ENCODE measurements at regions of chr19 and their contacts with region 1.

Region 1: DNA sequence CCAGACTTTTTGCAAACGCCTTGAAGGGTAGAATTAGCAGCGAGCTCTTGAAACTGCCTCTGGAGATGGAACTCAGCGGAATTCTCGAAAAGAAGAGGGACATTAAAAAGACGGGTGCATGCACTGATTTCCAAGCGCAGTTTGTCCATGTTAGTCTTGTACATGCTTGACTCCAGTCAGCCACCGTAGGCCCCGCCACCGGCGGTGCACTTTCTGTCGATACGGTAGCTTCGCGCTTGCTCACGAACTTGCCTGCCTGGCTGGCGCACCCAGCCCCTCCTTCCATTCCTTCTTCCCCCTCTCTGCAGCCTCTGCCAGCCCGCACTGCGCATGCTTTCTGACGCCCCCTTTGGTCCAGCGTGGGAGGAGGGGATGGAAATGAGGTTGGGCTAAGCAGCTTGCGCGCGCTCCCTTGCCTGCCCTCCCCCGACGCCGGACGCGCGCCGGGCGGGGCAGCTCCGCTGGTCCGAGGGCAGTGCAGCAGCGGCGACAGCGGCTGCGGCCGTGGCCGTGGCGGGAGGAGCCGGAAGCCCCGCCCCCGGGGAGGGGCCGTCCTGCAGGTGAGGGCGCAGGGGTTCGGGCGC is at the start of gene ZNF575:
- DNase-seq: peak; percentile 81
- H3K4me3 ChIP-seq: peak within 1 kb of the TSS; percentile 48 to 51
- H3K27ac ChIP-seq: peak within 1 kb of the TSS; percentile 88 to 93
- H3K4me1 ChIP-seq: peaks cover 2% of the 10 kb centered on the region
- H3K27me3 ChIP-seq: no peaks in the 10 kb centered on the region
- CTCF ChIP-seq: no peak
- POLR2A ChIP-seq: peak; percentile 23
- total RNA-seq, gene ZNF575: 2.0 TPM in 1 of 2 donors, not detected in the other

Region 2: DNA sequence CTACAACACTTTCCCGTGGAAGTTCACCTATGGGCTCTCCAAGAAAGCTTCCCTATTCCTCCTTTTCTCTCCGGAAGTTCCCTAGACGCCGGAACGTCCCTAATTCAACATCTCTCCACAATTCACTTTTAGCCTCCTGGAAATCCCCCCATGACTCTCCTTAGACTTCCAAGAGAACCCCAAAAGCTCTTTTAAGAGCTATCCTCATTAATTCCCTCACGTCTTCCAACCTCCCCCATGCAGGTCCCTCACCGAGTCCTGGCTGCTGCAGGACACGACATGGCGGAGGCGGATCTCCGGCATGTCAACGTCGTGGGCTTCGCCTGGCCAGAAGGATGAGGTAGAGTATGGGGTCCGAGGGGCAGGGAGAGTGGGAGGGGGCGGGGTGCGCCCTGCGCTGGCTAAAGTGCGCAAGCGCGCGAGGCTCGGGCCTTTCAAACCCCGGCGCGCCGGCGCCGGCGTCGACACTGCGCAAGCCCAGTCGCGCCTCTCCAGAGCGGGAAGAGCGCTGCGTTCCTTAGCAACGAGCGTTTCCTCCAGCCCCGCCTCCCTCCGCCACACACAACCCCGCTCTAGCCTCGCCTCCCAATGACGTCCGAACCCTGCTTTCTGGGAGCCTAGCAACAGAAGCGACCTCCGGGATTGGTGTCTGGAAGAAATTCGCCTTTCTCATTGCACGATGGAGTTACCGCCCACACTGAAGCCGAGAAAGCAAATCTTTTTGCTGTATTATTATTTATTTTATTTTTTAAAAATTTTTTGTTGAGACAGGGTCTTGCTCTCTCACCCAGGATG is 42.3 kb after region 1 on chr19 and contains the starts of genes PINLYP and XRCC1:
- intact Hi-C with region 1: loop called (anchors 5 kb)
- DNase-seq: peak; percentile 97
- H3K4me3 ChIP-seq: peak within 1 kb of the TSS; percentile 65 to 71
- H3K27ac ChIP-seq: peak within 1 kb of the TSS; percentile 75 to 77
- H3K4me1 ChIP-seq: no peaks in the 10 kb centered on the region
- H3K27me3 ChIP-seq: no peaks in the 10 kb centered on the region
- CTCF ChIP-seq: no peak
- POLR2A ChIP-seq: peak; percentile 63
- total RNA-seq, gene PINLYP: 4.8 to 7.8 TPM
- total RNA-seq, gene XRCC1: 25.8 to 52.5 TPM

Region 3: GRCh38 chr19:43595999-43596841 is 63.2 kb after region 1 on chr19 and contains the starts of genes IRGQ and ZNF576:
- intact Hi-C with region 1: loop called (anchors 2 kb)
- DNase-seq: peak; percentile 100
- H3K4me3 ChIP-seq: peak within 1 kb of the TSS; percentile 32 to 59
- H3K27ac ChIP-seq: peak within 1 kb of the TSS; percentile 94 to 97
- H3K4me1 ChIP-seq: peaks cover 28% of the 10 kb centered on the region
- H3K27me3 ChIP-seq: no peaks in the 10 kb centered on the region
- CTCF ChIP-seq: peak in 1 of 4 experiments; percentile 26
- POLR2A ChIP-seq: peak; percentile 96
- total RNA-seq, gene IRGQ: 28.3 to 30.4 TPM
- total RNA-seq, gene ZNF576: 25.1 to 30.6 TPM

Region 4: DNA sequence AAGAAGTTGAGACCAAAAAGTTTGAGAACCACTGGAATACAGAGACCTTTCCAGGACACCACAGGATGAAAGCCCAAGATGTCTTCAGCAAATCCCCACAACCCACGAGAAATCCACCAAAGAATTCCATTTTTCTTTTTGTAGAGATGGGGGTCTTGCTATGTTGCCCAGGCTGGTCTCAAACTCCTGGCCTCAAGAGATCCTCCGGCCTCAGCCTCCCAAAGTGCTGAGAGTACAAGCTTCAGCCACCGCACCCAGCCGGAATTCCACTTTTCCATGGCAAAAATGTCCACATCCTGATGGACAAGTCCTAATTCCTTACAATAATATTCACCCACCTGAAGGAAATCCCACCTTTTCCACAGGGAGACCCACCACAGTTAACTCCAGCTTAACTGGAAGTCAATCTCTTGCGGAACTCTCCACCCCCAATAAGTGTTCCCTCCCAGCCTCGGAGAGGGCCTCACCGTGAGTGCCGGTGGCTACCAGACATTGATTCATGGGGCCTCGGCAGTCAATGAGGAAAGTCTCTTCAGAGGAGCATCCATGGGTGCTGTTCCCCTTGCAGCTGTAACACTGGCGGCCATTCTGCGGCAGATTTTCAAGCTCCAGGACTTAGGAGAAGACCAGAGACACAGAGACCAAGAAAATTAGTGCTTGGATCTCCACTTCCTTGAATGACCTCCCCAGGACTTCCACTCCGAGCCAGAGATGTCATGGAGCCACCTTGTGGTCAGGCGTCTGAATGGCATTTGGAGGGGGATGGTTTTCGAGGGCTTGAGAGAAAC is 118.9 kb after region 1 on chr19:
- intact Hi-C with region 1: loop called (anchors 5 kb)
- DNase-seq: peak; percentile 68
- H3K4me3 ChIP-seq: no peak overlapping the region
- H3K27ac ChIP-seq: peak overlapping the region in 1 of 2 donors; percentile 4
- H3K4me1 ChIP-seq: no peaks in the 10 kb centered on the region
- H3K27me3 ChIP-seq: no peaks in the 10 kb centered on the region
- CTCF ChIP-seq: peak; percentile 61 to 86 (median 75)
- POLR2A ChIP-seq: no peak

Region 5: DNA sequence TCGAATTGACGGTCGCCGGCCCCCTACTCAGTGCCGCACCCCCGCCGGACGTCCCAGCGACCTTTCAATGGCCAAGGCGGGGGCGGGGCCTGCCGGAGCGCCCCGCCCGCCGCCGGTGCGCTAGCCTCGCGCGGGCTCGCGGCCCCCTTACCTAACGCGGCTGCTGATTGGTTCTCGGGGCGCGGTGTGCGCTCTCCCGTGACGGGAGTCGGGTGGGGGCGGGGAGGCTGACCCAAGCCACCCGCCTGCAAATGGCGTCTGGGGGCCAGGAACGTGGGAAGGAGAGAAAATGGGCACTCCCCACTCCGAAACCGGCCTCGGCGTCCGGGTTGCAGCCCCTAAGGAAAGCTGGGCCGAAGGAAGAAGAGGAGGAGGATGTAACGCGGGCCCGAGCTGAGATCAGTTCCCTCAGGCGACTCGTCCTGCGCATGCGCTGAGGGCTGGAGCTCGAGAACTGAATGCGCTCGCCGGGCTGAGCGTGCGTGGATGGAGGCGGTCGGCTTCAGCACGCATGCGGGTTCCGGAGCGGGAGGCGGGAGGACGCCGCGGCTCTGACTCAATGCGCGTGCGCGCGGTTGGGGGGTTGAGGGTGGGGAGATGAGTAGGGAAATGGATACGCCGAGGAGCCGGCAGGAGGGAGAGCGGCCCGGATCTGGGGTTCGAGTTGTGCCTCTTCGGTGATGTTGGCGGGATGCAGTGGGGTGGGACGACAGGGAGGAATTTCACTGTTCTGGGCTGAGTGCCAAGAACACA is 221.6 kb after region 1 on chr19 and contains the start of gene SMG9:
- intact Hi-C with region 1: loop called (anchors 10 kb)
- DNase-seq: peak; percentile 96
- H3K4me3 ChIP-seq: peak within 1 kb of the TSS; percentile 61 to 86
- H3K27ac ChIP-seq: peak within 1 kb of the TSS; percentile 95 to 99
- H3K4me1 ChIP-seq: no peaks in the 10 kb centered on the region
- H3K27me3 ChIP-seq: no peaks in the 10 kb centered on the region
- CTCF ChIP-seq: peak in 2 of 4 experiments; percentile 14 to 22
- POLR2A ChIP-seq: peak; percentile 77
- total RNA-seq, gene SMG9: 22.9 to 45.1 TPM

Measured in prostate gland (tissue), 2 donors.